H1 (cell line): ENCODE measurements at regions of chr1 and their contacts with region 1.

Region 1: GRCh38 chr1:216175714-216176113 is 247.5 kb downstream of the USH2A start:
- DNase-seq: peak; percentile 33 to 60
- H3K4me3 ChIP-seq: no peak overlapping the region
- H3K27ac ChIP-seq: no peak overlapping the region
- H3K4me1 ChIP-seq: no peaks in the 10 kb centered on the region
- H3K27me3 ChIP-seq: no peaks in the 10 kb centered on the region
- CTCF ChIP-seq: peak; percentile 57 to 69 (median 59)
- EP300 ChIP-seq: no peak
- POLR2A ChIP-seq: no peak
- RAD21 ChIP-seq: peak; percentile 72 to 84

Region 2: DNA sequence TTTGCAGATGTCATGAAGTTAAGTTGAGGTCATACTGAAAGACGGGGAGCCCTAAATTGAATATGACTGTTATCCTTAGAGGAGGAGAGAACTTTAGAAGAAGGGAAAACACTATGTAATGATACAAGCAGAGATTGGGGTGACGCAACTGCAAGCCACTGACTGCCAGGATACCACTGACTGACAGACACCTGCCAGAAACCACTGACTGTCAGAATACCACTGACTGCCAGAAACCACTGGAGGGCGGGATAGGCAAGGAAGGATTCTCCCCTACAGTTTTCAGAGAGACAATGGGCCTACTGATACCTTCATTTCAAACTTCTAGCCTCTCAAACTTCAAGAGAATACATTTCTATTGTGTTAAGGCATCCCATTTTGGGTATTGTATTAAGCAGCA is 141.2 kb before region 1 on chr1:
- CTCF ChIA-PET with region 1: interaction called, 18 read pairs
- POLR2A ChIA-PET with region 1: no interaction called
- DNase-seq: peak in 1 of 2 experiments; percentile 19
- H3K4me3 ChIP-seq: no peak overlapping the region
- H3K27ac ChIP-seq: no peak overlapping the region
- H3K4me1 ChIP-seq: no peaks in the 10 kb centered on the region
- H3K27me3 ChIP-seq: no peaks in the 10 kb centered on the region
- CTCF ChIP-seq: peak; percentile 56 to 86 (median 80)
- EP300 ChIP-seq: no peak
- POLR2A ChIP-seq: no peak
- RAD21 ChIP-seq: peak; percentile 95 to 96

Region 3: DNA sequence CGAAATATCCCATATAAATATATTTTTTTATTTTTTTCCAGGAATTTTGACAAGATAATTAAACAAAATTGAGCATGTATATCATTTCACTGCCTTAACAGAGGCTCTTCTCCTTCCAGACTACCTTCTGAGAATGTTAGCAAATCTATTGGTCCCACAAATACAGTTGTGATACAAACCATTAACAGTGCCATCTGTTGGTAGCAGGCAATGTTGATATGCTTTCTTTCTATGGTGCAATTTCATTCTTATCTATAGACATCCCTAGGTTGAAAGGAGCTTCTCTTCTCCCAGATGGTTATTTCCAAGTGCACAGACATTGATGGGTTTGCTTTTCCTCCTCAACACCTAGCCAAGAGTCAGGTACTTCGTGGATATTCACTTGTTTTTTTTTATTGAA is 56.1 kb before region 1 on chr1:
- CTCF ChIA-PET with region 1: interaction called, 12 read pairs
- POLR2A ChIA-PET with region 1: no interaction called
- DNase-seq: no peak
- H3K4me3 ChIP-seq: no peak overlapping the region
- H3K27ac ChIP-seq: no peak overlapping the region
- H3K4me1 ChIP-seq: no peaks in the 10 kb centered on the region; a peak in 1 of 7 replicates
- H3K27me3 ChIP-seq: peaks cover 0 to 2% (median 0%) of the 10 kb centered on the region in 4 experiments; a peak in 1 of 7 replicates
- CTCF ChIP-seq: peak in 2 of 3 experiments; percentile 26 to 59; a peak in 2 of 4 replicates
- EP300 ChIP-seq: no peak
- POLR2A ChIP-seq: no peak
- RAD21 ChIP-seq: peak; percentile 27 to 48

Region 4: GRCh38 chr1:216193839-216194439 is 18.2 kb after region 1 on chr1:
- CTCF ChIA-PET with region 1: interaction called, 11 read pairs
- POLR2A ChIA-PET with region 1: no interaction called
- DNase-seq: no peak
- H3K4me3 ChIP-seq: no peak overlapping the region
- H3K27ac ChIP-seq: no peak overlapping the region
- H3K4me1 ChIP-seq: no peaks in the 10 kb centered on the region
- H3K27me3 ChIP-seq: no peaks in the 10 kb centered on the region
- CTCF ChIP-seq: peak in 2 of 3 experiments; percentile 43 to 53; a peak in 3 of 4 replicates
- EP300 ChIP-seq: no peak
- POLR2A ChIP-seq: no peak
- RAD21 ChIP-seq: peak; percentile 70 to 76

Region 5: GRCh38 chr1:216221260-216221700 is 45.6 kb after region 1 on chr1:
- CTCF ChIA-PET with region 1: interaction called, 16 read pairs
- POLR2A ChIA-PET with region 1: no interaction called
- DNase-seq: peak; percentile 31 to 58
- H3K4me3 ChIP-seq: peak overlapping the region in 1 of 4 experiments; percentile 21; a peak in 1 of 8 replicates
- H3K27ac ChIP-seq: no peak overlapping the region
- H3K4me1 ChIP-seq: no peaks in the 10 kb centered on the region; a peak in 1 of 7 replicates
- H3K27me3 ChIP-seq: no peaks in the 10 kb centered on the region
- CTCF ChIP-seq: peak in 2 of 3 experiments; percentile 67 to 78; a peak in 3 of 4 replicates
- EP300 ChIP-seq: no peak
- POLR2A ChIP-seq: no peak
- RAD21 ChIP-seq: peak; percentile 73 to 78

Region 6: DNA sequence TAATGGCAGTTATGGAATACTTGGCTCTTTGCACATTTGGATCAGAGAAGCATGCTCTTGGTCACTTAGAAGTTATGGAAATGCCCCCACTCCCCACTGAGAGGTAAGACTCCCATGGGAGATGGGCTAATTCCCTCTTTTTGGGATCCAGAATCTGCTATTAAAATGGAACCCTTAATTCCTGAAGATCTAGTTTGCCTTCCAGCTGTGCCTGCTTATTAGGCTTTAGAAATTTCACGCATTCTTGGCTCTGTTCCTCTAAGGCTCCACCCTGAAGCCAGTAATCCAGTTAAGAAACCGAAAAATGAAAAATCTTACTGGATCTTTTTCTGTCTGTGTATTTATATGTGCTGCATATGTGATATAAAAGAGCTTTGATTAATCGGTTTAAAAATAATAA is 170.8 kb after region 1 on chr1:
- CTCF ChIA-PET with region 1: no interaction called
- POLR2A ChIA-PET with region 1: no interaction called
- DNase-seq: no peak
- H3K4me3 ChIP-seq: no peak overlapping the region
- H3K27ac ChIP-seq: no peak overlapping the region
- H3K4me1 ChIP-seq: no peaks in the 10 kb centered on the region
- H3K27me3 ChIP-seq: no peaks in the 10 kb centered on the region
- CTCF ChIP-seq: no peak
- EP300 ChIP-seq: no peak
- POLR2A ChIP-seq: no peak
- RAD21 ChIP-seq: no peak

Region 7: DNA sequence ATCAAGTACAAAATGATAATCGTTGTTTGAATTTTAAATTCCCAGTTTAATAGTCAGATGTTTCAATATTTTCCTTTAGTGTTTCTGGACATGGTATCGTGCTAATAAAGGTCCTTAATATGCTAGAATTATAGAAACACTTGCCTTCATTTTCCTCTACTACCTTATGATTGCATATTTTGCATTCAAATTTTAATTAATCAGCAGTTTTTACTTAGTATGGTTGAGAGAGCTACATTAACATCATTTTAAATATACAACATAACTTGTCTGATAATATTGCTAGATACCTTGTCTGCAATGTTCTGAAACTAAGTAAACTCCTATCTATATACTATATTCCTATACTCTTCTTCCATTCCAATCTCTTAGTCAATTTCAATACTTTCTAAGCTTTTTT is 181.2 kb after region 1 on chr1:
- CTCF ChIA-PET with region 1: no interaction called
- POLR2A ChIA-PET with region 1: no interaction called
- DNase-seq: no peak
- H3K4me3 ChIP-seq: no peak overlapping the region
- H3K27ac ChIP-seq: no peak overlapping the region
- H3K4me1 ChIP-seq: no peaks in the 10 kb centered on the region
- H3K27me3 ChIP-seq: no peaks in the 10 kb centered on the region
- CTCF ChIP-seq: no peak
- EP300 ChIP-seq: no peak
- POLR2A ChIP-seq: no peak
- RAD21 ChIP-seq: no peak